ENCODE measurements at regions of chr3 and their contacts with region 1.

Region 1: GRCh38 chr3:112111785-112112402 is 21.2 kb downstream of the GCSAM start:
- DNase-seq: peak; percentile 69
- H3K4me3 Mint-ChIP-seq: no peak overlapping the region
- H3K27ac Mint-ChIP-seq: no peak overlapping the region
- H3K4me1 Mint-ChIP-seq: peaks cover 18% of the 10 kb centered on the region
- H3K27me3 Mint-ChIP-seq: no peaks in the 10 kb centered on the region

Region 2: GRCh38 chr3:112092496-112093179 is 19.3 kb before region 1 on chr3:
- CTCF ChIA-PET with region 1: interaction called, 17 read pairs
- POLR2A ChIA-PET with region 1: no interaction called
- DNase-seq: no peak
- H3K4me3 Mint-ChIP-seq: no peak overlapping the region
- H3K27ac Mint-ChIP-seq: peak overlapping the region; percentile 3
- H3K4me1 Mint-ChIP-seq: peaks cover 48% of the 10 kb centered on the region
- H3K27me3 Mint-ChIP-seq: no peaks in the 10 kb centered on the region

Region 3: DNA sequence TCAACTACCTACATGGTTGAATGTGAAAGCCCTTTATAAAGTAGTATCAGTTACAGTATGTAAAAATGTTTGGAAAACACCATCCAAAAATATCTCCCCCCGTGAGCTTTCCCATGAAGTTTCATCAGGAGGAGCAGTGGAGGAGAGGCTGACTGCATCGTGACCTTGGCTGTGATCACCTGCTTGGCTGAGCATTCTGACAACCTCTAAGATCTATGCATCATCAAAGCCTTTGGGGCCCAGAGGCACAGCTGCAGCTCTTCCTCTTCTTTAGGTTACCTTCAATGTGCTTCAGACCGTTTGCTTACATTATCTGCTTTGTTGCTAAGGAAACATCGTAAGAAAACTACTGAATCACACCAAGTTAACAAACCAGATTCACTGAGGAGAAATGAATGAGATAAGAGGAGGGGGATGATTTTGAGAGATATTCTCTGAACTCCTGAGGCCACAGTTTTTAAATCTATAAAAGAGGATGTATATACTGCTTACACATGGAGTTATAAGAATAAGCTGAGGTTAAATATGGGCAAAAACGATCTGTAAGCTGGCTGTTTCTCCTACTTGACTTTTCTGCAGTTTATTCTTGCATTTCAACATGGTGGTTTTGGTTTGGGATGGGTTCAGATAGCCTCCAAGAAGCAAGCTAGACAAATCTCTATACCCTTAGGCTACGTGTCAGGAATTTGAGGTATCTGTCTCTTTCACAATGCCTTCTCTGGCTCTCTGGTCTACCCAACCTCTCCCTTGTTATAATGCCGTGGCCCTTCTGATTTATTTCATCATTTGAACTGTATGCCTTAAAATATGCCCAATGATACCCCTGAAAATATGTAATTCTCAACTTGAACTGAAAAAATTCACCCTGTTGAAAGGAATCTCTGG is 17.2 kb after region 1 on chr3:
- CTCF ChIA-PET with region 1: interaction called, 36 read pairs
- POLR2A ChIA-PET with region 1: interaction called, 5 read pairs
- DNase-seq: peak; percentile 57
- H3K4me3 Mint-ChIP-seq: peak overlapping the region; percentile 26
- H3K27ac Mint-ChIP-seq: peak overlapping the region; percentile 76
- H3K4me1 Mint-ChIP-seq: peaks cover 76% of the 10 kb centered on the region
- H3K27me3 Mint-ChIP-seq: no peaks in the 10 kb centered on the region

Region 4: GRCh38 chr3:112136959-112137693 is 25.2 kb after region 1 on chr3:
- CTCF ChIA-PET with region 1: interaction called, 18 read pairs
- POLR2A ChIA-PET with region 1: interaction called, 5 read pairs
- DNase-seq: peak; percentile 53
- H3K4me3 Mint-ChIP-seq: no peak overlapping the region
- H3K27ac Mint-ChIP-seq: no peak overlapping the region
- H3K4me1 Mint-ChIP-seq: peaks cover 46% of the 10 kb centered on the region
- H3K27me3 Mint-ChIP-seq: no peaks in the 10 kb centered on the region

Region 5: DNA sequence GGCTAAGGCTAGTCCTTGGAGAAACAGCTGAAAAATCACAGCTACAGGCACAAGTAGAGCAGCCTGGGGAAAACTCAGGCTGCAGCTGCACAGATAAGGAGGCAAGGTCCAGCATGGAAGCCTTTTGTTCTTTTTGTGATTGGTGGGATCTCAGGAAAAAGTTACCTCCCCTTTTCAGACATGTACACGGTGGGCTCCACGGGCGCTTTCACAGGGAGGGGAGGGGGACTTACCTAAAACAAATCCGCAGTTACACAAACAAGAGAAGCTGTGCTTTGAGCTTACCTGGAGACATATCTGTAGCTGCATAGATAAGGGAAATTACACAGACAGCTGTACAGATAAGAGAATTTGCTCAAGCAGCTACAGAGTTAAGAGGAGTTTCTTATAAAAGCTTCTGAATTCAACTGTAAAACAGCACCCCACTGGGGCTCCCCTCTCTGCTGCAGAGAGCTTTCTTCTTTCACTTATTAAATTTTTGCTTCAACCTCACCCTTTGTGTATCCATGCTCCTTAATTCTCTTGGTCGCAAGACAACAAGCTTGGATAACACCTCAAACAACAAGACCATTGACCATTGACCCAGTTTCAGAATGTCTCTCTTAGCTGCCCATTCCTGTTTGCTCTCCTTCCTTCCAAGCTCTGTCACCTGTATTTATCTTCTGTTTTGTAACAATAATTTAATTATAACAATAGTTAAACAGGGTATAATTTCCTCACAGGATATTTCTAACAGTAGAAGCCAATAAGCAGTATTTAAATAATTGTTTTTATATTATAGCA is 210.2 kb after region 1 on chr3:
- CTCF ChIA-PET with region 1: interaction called, 17 read pairs
- POLR2A ChIA-PET with region 1: no interaction called
- DNase-seq: no peak
- H3K4me3 Mint-ChIP-seq: no peak overlapping the region
- H3K27ac Mint-ChIP-seq: no peak overlapping the region
- H3K4me1 Mint-ChIP-seq: no peaks in the 10 kb centered on the region
- H3K27me3 Mint-ChIP-seq: peaks cover 17% of the 10 kb centered on the region

Region 6: DNA sequence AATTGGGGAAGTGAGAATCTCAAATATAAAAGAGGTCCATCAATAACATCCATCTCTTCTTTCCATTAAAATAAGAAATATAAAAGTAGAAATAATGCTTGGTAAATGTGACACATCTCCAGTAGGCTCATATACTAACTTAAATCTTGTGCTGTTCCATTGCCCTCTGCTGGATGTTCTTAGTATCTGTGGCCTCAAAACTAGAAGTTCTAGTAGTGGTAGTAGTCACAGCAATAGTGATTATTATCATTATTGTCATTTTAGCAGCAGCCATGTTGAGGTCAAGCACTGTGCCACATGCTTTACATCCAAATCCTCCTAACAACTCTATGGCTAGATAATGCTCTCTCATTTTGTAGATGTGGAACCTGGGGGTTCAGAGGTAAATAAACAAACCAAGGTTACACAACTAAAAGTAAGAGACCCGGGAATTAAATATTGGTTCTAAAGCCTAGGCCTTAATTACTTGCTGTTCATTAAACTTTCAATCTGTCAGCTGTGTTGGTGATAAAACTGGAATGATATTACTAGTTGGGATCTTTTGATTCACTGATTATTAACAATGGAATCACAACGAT is 407.6 kb after region 1 on chr3:
- CTCF ChIA-PET with region 1: interaction called, 12 read pairs
- POLR2A ChIA-PET with region 1: no interaction called
- DNase-seq: peak; percentile 33
- H3K4me3 Mint-ChIP-seq: no peak overlapping the region
- H3K27ac Mint-ChIP-seq: no peak overlapping the region
- H3K4me1 Mint-ChIP-seq: peaks cover 31% of the 10 kb centered on the region
- H3K27me3 Mint-ChIP-seq: no peaks in the 10 kb centered on the region